ENCODE measurements at regions of chr22 and their contacts with region 1.

Region 1: DNA sequence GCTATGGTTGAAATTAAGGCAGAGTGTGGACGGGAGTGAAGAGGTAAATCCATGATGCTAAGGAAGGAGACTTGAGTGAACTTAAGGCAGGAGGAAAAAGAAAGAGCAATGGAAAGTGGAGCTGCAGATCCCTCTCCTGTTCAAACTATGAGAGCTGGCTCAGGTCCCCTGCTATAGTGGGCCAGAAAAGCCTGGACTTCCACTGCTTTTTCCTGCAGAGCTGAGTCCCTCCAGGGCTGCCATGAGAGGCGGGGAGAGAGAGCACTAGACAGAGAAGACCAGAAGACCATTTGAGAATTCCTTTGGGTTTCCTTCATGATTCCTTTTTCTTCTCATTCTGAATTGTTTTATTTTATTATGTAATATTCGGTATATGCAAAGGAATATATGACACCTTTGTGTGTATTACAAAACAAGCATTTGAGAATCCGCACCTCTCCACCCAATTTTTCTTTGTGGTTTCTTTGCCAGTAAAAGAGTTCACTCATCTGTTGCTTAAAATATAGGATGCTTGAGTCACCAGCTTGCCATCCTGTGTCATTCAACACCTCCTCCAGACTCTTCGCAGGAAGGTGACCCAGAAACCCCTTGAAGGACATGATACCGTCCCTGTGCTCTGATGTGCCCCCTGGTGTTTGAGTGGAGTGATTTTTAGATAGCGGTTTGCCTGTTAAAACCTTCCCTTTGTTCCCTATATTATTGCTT is 24.4 kb downstream of the SREBF2 start:
- DNase-seq: peak; percentile 20
- ATAC-seq: peak; percentile 68; the same call in 1 of the 2 replicates
- H3K4me3 ChIP-seq: no peak overlapping the region
- H3K27ac ChIP-seq: no peak overlapping the region
- H3K4me1 ChIP-seq: no peaks in the 10 kb centered on the region; the same call in 1 of the 2 replicates
- H3K27me3 ChIP-seq: no peaks in the 10 kb centered on the region
- CTCF ChIP-seq: peak; percentile 74

Region 2: GRCh38 chr22:41697126-41697775 is 160.1 kb before region 1 on chr22:
- CTCF ChIA-PET with region 1: interaction called, 5 read pairs
- POLR2A ChIA-PET with region 1: no interaction called
- in situ Hi-C with region 1: no loop called
- intact Hi-C with region 1: loop called (anchors 10 kb)
- DNase-seq: peak; percentile 71
- ATAC-seq: peak; percentile 94
- H3K4me3 ChIP-seq: peak overlapping the region in 1 of 2 experiments; percentile 32; a peak in 2 of 4 replicates
- H3K27ac ChIP-seq: no peak overlapping the region; the same call in 1 of the 2 replicates
- H3K4me1 ChIP-seq: no peaks in the 10 kb centered on the region
- H3K27me3 ChIP-seq: no peaks in the 10 kb centered on the region
- CTCF ChIP-seq: peak; percentile 93

Region 3: GRCh38 chr22:41826430-41827383 is 30.6 kb before region 1 on chr22:
- CTCF ChIA-PET with region 1: interaction called, 15 read pairs
- POLR2A ChIA-PET with region 1: no interaction called
- in situ Hi-C with region 1: no loop called
- intact Hi-C with region 1: no loop called
- DNase-seq: no peak
- ATAC-seq: no peak
- H3K4me3 ChIP-seq: no peak overlapping the region
- H3K27ac ChIP-seq: no peak overlapping the region
- H3K4me1 ChIP-seq: peaks cover 5% of the 10 kb centered on the region
- H3K27me3 ChIP-seq: no peaks in the 10 kb centered on the region
- CTCF ChIP-seq: no peak

Region 4: DNA sequence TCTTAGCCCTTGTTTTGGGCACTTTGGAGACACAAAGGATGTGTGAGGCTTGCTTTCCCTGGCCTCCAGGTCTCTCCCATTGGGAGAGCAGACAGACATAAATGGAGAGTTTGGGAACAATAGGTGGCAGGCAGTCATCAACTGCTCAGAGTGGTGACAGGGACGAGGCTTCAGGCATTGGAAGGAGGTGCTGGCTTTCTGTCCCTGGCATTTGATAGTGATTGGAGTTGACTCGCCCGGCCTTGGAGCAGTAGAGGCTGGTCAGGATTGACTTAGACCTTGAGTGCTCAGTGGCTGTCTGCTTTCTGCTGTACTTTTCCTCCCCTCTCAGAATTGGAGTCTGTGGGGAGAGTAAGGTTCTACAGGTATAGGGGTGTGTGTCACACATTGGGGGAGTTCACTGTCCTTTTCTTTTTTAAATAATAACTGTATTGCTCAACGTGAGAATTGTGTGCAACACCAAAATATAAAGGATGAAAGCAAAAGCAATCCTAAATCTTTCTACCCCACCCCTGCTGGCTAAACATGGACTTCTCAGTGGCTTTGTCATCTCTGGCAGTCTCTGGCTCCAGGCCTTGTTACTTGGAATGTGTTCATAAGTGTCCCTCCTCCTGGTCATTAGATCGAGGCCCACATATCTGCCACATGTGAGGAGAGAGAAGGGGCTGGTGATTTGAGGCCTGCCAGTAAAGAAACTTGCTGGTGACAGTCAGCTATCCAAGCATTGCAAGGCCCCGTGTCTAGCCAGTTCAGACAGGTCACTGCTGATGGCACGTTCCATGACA is 36.5 kb after region 1 on chr22:
- CTCF ChIA-PET with region 1: no interaction called
- POLR2A ChIA-PET with region 1: interaction called, 10 read pairs
- in situ Hi-C with region 1: no loop called
- intact Hi-C with region 1: no loop called
- DNase-seq: no peak
- ATAC-seq: no peak
- H3K4me3 ChIP-seq: no peak overlapping the region
- H3K27ac ChIP-seq: no peak overlapping the region
- H3K4me1 ChIP-seq: no peaks in the 10 kb centered on the region
- H3K27me3 ChIP-seq: no peaks in the 10 kb centered on the region
- CTCF ChIP-seq: no peak

Region 5: GRCh38 chr22:42160830-42161696 is 303.8 kb after region 1 on chr22:
- CTCF ChIA-PET with region 1: no interaction called
- POLR2A ChIA-PET with region 1: no interaction called
- in situ Hi-C with region 1: no loop called
- intact Hi-C with region 1: no loop called
- DNase-seq: no peak
- ATAC-seq: no peak
- H3K4me3 ChIP-seq: no peak overlapping the region
- H3K27ac ChIP-seq: no peak overlapping the region
- H3K4me1 ChIP-seq: no peaks in the 10 kb centered on the region
- H3K27me3 ChIP-seq: no peaks in the 10 kb centered on the region
- CTCF ChIP-seq: no peak